Tibial artery (tissue), 4 donors: ENCODE measurements at regions of chr16 and their contacts with region 1.

Region 1: DNA sequence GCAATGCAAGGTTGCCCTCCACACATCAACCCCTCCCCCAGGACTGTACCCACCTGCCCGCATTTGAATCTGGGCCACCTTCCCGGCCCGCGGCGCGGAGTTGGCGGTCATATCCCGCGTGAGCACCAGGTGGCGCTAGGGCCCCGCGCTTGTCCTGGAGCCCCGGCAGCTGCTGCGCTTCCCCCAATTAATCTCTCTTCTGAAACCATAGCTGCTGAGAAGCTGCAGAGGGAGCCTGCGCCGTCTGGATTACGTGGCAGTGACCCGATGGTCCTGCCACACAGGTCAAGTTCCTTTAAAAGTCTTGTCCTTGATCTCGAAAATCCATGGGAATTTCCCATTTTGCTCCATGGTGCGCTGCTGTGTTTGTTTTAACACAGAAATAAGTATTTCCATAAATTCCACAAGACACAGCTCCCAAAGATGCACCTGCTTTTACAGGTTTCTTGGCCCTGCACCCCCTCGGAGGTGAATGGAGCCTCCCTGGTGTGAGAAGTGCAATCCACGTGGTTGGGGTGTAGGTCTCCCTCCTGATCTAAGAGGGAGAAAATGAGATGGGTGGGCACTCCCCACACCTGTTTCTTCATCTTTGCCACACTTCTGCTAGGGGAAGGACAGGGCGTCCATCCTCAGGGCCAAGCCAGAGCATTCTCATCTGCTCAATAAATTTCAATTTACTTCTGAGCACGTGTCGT is 22.1 kb downstream of the COX4I1 start:
- DNase-seq: peak; percentile 68 to 79
- H3K4me3 ChIP-seq: no peak overlapping the region
- H3K27ac ChIP-seq: no peak overlapping the region
- H3K4me1 ChIP-seq: peaks cover 0 to 5% (median 0%) of the 10 kb centered on the region in 4 donors
- H3K27me3 ChIP-seq: peaks cover 0 to 55% of the 10 kb centered on the region in 2 donors
- CTCF ChIP-seq: peak; percentile 93 to 95

Region 2: GRCh38 chr16:85986931-85987749 is 165.6 kb after region 1 on chr16:
- intact Hi-C with region 1: loop called (anchors 10 kb)
- DNase-seq: no peak
- H3K4me3 ChIP-seq: no peak overlapping the region
- H3K27ac ChIP-seq: no peak overlapping the region
- H3K4me1 ChIP-seq: no peaks in the 10 kb centered on the region
- H3K27me3 ChIP-seq: peaks cover 0 to 71% of the 10 kb centered on the region in 2 donors
- CTCF ChIP-seq: no peak

Region 3: DNA sequence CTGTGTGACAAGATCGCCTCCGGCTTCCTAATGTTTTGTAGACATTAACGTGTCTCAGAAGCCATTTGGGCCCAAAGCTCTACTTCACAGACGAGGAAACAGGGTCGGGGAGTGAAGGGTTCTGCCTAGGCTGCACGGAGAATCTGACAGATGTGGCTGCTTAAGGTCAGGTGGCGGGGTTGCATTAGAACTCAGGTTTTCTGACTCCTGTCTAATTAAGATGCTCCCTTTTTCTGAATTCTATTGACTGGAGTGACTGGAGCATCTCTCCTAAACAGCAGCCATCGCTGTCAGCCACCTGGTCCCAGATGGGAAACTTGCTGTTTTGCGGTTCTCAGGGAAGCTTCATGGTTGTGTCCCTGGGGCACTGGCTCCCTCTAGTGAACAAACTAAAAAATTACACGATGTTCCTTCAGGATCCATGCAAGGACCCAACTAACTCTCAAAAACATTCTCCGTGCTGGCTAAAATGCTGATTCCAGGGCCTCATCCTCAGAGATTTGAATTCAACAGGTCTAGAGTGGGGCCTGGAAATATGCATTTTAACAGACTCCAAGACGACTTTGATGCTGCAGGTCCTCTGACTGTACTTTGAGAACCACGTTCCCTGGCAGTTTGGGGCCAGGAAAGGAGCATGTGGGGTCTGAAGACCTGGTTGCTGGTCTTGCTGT is 194.7 kb after region 1 on chr16:
- intact Hi-C with region 1: loop called (anchors 2 kb)
- DNase-seq: peak in 1 of 2 donors; percentile 38
- H3K4me3 ChIP-seq: no peak overlapping the region
- H3K27ac ChIP-seq: no peak overlapping the region
- H3K4me1 ChIP-seq: no peaks in the 10 kb centered on the region
- H3K27me3 ChIP-seq: peaks cover 0 to 53% of the 10 kb centered on the region in 2 donors
- CTCF ChIP-seq: peak; percentile 61 to 75

Region 4: GRCh38 chr16:86519649-86520316 is 698.2 kb after region 1 on chr16:
- intact Hi-C with region 1: loop called (anchors 10 kb)
- DNase-seq: peak in 1 of 2 donors; percentile 37
- H3K4me3 ChIP-seq: no peak overlapping the region
- H3K27ac ChIP-seq: no peak overlapping the region
- H3K4me1 ChIP-seq: peaks cover 0 to 20% (median 13%) of the 10 kb centered on the region in 4 donors
- H3K27me3 ChIP-seq: peaks cover 0 to 88% of the 10 kb centered on the region in 2 donors
- CTCF ChIP-seq: peak; percentile 78 to 88